ENCODE measurements at regions of chr3 and their contacts with region 1.

Region 1: DNA sequence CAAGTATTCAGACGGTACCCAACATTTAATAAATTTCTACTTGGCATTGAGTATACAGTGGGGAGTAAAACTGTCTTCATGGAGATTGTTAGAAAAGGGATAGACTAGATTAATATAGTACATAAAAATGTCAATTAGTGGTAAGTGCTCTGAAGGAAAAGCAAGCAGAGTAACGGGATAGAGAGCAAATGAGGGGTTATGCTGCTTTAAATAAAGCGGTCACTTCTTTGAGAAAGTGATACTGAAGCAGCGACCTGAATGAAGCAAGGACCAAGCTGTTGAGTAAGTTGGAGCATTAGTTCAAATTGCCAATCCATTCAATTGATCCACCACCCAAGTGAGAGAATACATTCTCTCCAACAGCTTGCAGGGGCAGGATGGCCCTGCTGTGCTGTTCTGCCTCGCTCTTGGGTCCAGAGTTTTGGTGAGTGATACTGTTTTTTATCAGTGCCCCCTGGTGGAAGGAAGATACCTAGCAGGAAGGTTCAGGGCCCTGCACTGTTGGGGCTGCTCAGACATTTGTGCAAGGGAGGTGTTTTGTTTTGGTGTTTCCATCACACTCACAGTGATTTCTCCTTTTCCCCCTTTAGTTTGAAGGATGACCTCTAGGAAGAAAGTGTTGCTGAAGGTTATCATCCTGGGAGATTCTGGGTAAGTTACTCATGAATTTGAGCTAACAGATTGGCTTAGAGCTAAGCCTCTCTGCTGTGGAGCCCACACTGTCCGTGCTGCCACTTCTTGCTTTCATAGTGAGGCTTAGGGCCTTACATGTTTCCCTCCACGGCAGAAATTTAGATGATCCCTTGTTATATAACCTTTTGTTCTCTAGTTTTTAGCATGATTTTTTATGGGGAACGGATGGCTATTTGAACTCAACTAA is 69.0 kb downstream of the RAB7A start:
- DNase-seq: peak; percentile 83
- H3K4me3 Mint-ChIP-seq: peak overlapping the region; percentile 51
- H3K27ac Mint-ChIP-seq: peak overlapping the region; percentile 91
- H3K4me1 Mint-ChIP-seq: peaks cover 94% of the 10 kb centered on the region
- H3K27me3 Mint-ChIP-seq: no peaks in the 10 kb centered on the region

Region 2: GRCh38 chr3:128714887-128715491 is 80.0 kb before region 1 on chr3:
- CTCF ChIA-PET with region 1: interaction called, 4 read pairs
- intact Hi-C with region 1: loop called (anchors 1 kb)
- DNase-seq: peak; percentile 68
- H3K4me3 Mint-ChIP-seq: no peak overlapping the region
- H3K27ac Mint-ChIP-seq: peak overlapping the region; percentile 71
- H3K4me1 Mint-ChIP-seq: peaks cover 22% of the 10 kb centered on the region
- H3K27me3 Mint-ChIP-seq: no peaks in the 10 kb centered on the region

Region 3: GRCh38 chr3:128780101-128780837 is 14.7 kb before region 1 on chr3:
- CTCF ChIA-PET with region 1: interaction called, 68 read pairs
- intact Hi-C with region 1: loop called (anchors 1 kb)
- DNase-seq: no peak
- H3K4me3 Mint-ChIP-seq: no peak overlapping the region
- H3K27ac Mint-ChIP-seq: peak overlapping the region; percentile 61
- H3K4me1 Mint-ChIP-seq: peaks cover 89% of the 10 kb centered on the region
- H3K27me3 Mint-ChIP-seq: no peaks in the 10 kb centered on the region

Measured in activated naive CD4-positive, alpha-beta T cell treated with anti-CD3 and anti-CD28 coated beads for 36 hours (primary cell).